Dendritic cell treated with granulocyte-macrophage colony-stimulating factor and Interleukin-4, amounts not matched to agents 40 ng/mL and 50 ng/mL, for 4 days (primary cell): ENCODE measurements at regions of chr17 and their contacts with region 1.

Region 1: DNA sequence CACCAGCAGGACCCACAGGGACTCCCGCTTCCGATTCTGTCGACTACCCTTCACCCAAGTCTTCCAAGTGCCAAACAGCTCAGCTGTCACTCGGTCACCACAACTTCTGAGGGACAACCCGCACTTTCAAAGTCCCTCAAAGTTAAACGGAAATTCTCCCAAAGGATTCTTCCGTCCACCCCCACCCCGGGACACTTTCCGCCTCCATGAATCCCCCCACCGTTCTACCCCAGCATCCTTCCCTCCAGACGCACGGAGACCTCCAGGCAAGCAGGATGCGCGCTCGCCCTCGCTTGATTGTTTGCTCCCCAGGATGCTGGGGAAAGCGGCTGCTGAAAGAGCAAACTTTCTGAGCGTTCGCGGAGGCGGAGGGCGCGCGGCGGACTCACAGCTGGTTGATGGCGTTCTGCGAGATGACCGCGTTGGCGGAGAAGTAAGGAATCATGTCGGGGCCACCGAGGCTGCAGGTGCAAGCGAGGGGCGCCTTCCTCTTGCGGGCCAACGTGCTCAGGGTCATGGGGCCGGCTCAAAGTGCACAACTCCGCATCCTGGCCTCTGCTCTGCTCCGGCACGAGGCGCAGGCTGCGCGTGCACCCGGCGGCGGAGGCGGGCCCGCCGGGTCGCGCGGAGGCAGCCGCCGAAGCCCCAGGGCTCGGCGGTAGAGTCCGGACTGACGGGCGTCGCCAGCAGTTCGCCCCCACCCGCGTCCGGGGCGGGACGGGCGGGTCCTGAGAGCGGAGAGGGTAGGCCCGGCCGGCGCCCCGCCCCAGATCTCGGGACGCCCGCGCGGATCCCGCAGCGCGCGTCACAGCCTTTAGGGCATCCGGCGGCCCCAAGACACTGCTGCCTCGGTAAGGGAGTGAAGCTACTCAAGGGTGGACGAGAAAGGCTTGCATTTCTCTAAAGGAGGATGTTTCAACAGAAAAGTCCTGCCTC is 138.3 kb upstream of the CORO6 start:
- H3K4me3 Mint-ChIP-seq: peak overlapping the region; percentile 84
- H3K27ac Mint-ChIP-seq: peak overlapping the region; percentile 88
- H3K4me1 Mint-ChIP-seq: peaks cover 22% of the 10 kb centered on the region
- H3K27me3 Mint-ChIP-seq: no peaks in the 10 kb centered on the region

Region 2: GRCh38 chr17:29252101-29252866 is 508.7 kb before region 1 on chr17:
- intact Hi-C with region 1: no loop called
- H3K4me3 Mint-ChIP-seq: no peak overlapping the region
- H3K27ac Mint-ChIP-seq: no peak overlapping the region
- H3K4me1 Mint-ChIP-seq: peaks cover 40% of the 10 kb centered on the region
- H3K27me3 Mint-ChIP-seq: no peaks in the 10 kb centered on the region

Region 3: GRCh38 chr17:29682054-29682453 is 79.0 kb before region 1 on chr17:
- intact Hi-C with region 1: loop called (anchors 10 kb)
- H3K4me3 Mint-ChIP-seq: peak overlapping the region; percentile 30
- H3K27ac Mint-ChIP-seq: peak overlapping the region; percentile 77
- H3K4me1 Mint-ChIP-seq: peaks cover 37% of the 10 kb centered on the region
- H3K27me3 Mint-ChIP-seq: no peaks in the 10 kb centered on the region

Region 4: GRCh38 chr17:29707212-29707571 is 53.8 kb before region 1 on chr17:
- intact Hi-C with region 1: loop called (anchors 2 kb)
- H3K4me3 Mint-ChIP-seq: peak overlapping the region; percentile 82
- H3K27ac Mint-ChIP-seq: peak overlapping the region; percentile 99
- H3K4me1 Mint-ChIP-seq: peaks cover 43% of the 10 kb centered on the region
- H3K27me3 Mint-ChIP-seq: no peaks in the 10 kb centered on the region

Region 5: GRCh38 chr17:29722411-29723198 is 38.4 kb before region 1 on chr17:
- intact Hi-C with region 1: loop called (anchors 5 kb)
- H3K4me3 Mint-ChIP-seq: peak overlapping the region; percentile 58
- H3K27ac Mint-ChIP-seq: peak overlapping the region; percentile 89
- H3K4me1 Mint-ChIP-seq: peaks cover 71% of the 10 kb centered on the region
- H3K27me3 Mint-ChIP-seq: no peaks in the 10 kb centered on the region

Region 6: GRCh38 chr17:29740017-29740416 is 21.0 kb before region 1 on chr17:
- intact Hi-C with region 1: no loop called
- H3K4me3 Mint-ChIP-seq: no peak overlapping the region
- H3K27ac Mint-ChIP-seq: peak overlapping the region; percentile 30
- H3K4me1 Mint-ChIP-seq: peaks cover 31% of the 10 kb centered on the region
- H3K27me3 Mint-ChIP-seq: no peaks in the 10 kb centered on the region